A673 (cell line): ENCODE measurements at regions of chr19 and their contacts with region 1.

Region 1: GRCh38 chr19:6218491-6219162 is 61.1 kb downstream of the MLLT1 start:
- DNase-seq: peak; percentile 87
- H3K4me3 ChIP-seq: no peak overlapping the region
- H3K27ac ChIP-seq: peak overlapping the region; percentile 71
- H3K4me1 ChIP-seq: peaks cover 16% of the 10 kb centered on the region
- H3K27me3 ChIP-seq: no peaks in the 10 kb centered on the region
- CTCF ChIP-seq: peak; percentile 94

Region 2: DNA sequence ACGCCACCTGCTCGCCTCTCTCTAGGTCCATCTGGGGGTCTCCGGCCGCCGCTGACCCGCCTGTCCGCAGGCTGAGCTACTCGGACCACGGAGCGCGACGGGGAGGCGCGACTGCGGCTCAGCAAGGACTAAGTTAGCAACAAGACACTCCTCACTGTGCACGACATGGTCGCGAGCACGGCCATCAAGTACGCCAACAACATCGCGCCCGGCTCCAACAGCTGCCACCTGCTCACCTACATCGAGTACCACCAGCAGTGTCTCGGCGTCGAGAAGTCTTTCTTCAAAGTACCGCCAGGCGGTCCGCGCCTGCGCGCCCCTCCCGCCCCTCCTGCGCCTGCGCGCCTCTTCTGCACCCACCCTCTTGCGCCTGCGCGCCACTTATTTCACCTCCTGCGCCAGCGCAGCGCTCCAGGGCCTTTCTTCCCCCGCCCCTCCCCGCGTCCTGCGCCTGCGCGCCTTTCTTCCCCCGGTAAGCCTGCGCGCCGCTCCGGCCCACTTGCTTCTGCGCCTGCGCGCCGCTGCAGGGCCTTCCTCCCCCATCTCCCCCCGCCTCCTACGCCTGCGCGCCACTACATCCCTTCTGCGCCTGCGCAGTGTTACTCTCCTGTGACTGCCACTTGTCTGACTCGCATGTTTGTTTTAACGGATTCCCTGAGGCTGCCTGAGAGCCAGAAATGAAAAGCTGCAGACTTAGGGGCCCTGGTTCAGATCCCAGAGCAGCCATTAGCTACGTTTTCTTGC is 19.2 kb before region 1 on chr19:
- CTCF ChIA-PET with region 1: no interaction called
- POLR2A ChIA-PET with region 1: interaction called, 13 read pairs
- intact Hi-C with region 1: no loop called
- DNase-seq: peak; percentile 99
- H3K4me3 ChIP-seq: peak overlapping the region; percentile 66
- H3K27ac ChIP-seq: peak overlapping the region; percentile 77
- H3K4me1 ChIP-seq: no peaks in the 10 kb centered on the region
- H3K27me3 ChIP-seq: no peaks in the 10 kb centered on the region
- CTCF ChIP-seq: no peak

Region 3: DNA sequence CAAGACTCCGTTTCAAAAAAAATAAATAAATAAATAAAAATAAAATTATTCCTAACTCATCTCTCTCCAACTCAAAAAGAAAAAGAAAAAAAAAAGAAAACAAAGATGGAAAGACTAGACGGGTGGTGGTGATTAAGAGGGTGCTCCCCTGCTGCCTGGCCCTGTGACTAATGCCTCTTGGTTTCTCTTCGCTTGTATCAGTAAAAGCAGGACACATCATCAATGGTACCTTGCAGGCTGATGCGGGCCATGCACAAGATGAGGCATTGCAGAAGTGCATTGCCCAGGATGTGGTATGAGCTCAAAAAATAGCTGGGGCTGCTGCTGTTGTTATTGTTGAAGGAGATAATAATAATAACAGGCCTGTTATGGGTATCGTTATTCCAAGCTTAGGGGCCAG is 100.1 kb after region 1 on chr19:
- CTCF ChIA-PET with region 1: no interaction called
- POLR2A ChIA-PET with region 1: no interaction called
- intact Hi-C with region 1: no loop called
- DNase-seq: no peak
- H3K4me3 ChIP-seq: no peak overlapping the region
- H3K27ac ChIP-seq: no peak overlapping the region
- H3K4me1 ChIP-seq: no peaks in the 10 kb centered on the region
- H3K27me3 ChIP-seq: no peaks in the 10 kb centered on the region
- CTCF ChIP-seq: no peak